ENCODE measurements at regions of chr14 and their contacts with region 1.

Region 1: GRCh38 chr14:71467361-71467811 is 464.8 kb upstream of the RGS6 start:
- DNase-seq: no peak
- H3K4me3 ChIP-seq: peak overlapping the region in 58 of 59 donors; percentile 6 to 70 (median 40)
- H3K27ac ChIP-seq: peak overlapping the region in 58 of 59 donors; percentile 11 to 91 (median 77)
- H3K27me3 ChIP-seq: no peaks in the 10 kb centered on the region
- CTCF ChIP-seq: no peak

Region 2: GRCh38 chr14:71529848-71530247 is 62.5 kb after region 1 on chr14:
- intact Hi-C with region 1: loop called in 1 of 2 experiments (anchors 10 kb)
- DNase-seq: peak in 1 of 10 donors; percentile 35
- H3K4me3 ChIP-seq: peak overlapping the region in 1 of 59 donors; percentile 4
- H3K27ac ChIP-seq: peak overlapping the region in 28 of 59 donors; percentile 2 to 76 (median 45)
- H3K27me3 ChIP-seq: no peaks in the 10 kb centered on the region
- CTCF ChIP-seq: no peak

Region 3: DNA sequence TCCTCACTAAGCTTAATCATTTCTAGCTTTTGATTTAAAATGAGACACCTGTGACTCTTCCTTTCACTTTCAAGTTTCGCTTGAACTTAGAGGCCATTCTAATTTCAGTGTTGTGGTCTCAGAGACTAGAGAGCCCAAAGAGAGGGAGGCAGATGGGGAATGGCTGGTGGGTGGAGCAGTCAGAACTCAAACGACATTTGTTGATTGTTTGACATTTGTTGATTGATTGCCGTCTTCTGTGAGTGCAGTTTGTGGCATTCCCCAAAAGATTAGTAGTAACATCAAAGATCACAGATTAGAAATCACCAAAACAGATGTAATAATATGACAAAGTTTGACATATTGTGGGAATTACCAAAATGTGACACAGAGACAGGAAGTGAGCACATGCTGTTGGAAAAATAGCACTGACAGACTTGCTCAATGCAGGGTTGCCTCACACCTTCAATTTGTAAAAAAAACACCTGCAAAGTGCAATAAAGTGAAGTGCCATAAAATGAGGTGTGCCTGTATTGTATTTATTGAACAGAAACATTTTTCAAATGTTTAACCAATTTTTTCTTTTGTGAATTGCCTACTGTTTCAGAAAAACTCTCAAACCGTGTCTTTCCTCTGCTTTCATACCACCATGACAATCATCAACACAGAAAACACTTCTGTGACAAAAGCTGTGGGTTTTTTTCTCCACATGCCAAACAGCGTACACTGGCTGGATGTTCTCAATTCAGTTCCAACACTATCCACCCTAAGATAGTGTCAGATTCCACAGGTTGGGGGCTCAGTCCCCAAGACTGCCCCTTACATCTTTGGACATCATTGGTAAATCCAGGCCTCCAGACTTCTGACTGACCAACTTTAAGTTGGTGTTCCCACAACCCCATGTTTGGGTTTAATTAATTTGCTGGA is 88.5 kb after region 1 on chr14:
- intact Hi-C with region 1: no loop called
- DNase-seq: no peak
- H3K4me3 ChIP-seq: no peak overlapping the region
- H3K27ac ChIP-seq: peak overlapping the region in 11 of 59 donors; percentile 3 to 73 (median 27)
- H3K27me3 ChIP-seq: no peaks in the 10 kb centered on the region
- CTCF ChIP-seq: no peak

Region 4: GRCh38 chr14:71692496-71692895 is 225.1 kb after region 1 on chr14:
- intact Hi-C with region 1: loop called in 1 of 2 experiments (anchors 10 kb)
- DNase-seq: peak in 7 of 10 donors; percentile 46 to 78 (median 60)
- H3K4me3 ChIP-seq: peak overlapping the region in 1 of 59 donors; percentile 4
- H3K27ac ChIP-seq: peak overlapping the region in 52 of 59 donors; percentile 10 to 80 (median 56)
- H3K27me3 ChIP-seq: no peaks in the 10 kb centered on the region
- CTCF ChIP-seq: no peak